ENCODE measurements at regions of chr3 and their contacts with region 1.

Region 1: DNA sequence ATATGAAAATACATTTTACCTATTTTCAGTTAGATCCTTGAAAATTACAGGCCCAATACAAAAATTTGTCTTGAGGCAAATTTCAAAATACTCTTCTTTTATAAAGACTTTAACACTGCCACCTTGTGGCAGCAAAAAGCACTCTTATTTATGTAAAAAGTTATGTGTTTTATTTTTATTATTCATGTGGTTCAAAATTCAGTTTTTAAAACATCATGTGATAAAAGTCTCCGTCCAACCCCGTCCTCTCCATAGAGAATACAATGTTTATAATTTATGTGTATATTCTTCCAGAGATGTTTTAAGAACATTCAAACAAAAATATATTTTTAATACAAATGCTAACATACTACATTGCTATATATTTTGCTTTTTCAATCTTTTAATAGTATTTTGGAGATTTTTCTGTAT is 36.9 kb upstream of the TRIM59 start:
- DNase-seq: peak; percentile 68
- H3K4me3 ChIP-seq: no peak overlapping the region
- H3K27ac ChIP-seq: no peak overlapping the region
- H3K4me1 ChIP-seq: no peaks in the 10 kb centered on the region
- CTCF ChIP-seq: peak; percentile 93

Region 2: DNA sequence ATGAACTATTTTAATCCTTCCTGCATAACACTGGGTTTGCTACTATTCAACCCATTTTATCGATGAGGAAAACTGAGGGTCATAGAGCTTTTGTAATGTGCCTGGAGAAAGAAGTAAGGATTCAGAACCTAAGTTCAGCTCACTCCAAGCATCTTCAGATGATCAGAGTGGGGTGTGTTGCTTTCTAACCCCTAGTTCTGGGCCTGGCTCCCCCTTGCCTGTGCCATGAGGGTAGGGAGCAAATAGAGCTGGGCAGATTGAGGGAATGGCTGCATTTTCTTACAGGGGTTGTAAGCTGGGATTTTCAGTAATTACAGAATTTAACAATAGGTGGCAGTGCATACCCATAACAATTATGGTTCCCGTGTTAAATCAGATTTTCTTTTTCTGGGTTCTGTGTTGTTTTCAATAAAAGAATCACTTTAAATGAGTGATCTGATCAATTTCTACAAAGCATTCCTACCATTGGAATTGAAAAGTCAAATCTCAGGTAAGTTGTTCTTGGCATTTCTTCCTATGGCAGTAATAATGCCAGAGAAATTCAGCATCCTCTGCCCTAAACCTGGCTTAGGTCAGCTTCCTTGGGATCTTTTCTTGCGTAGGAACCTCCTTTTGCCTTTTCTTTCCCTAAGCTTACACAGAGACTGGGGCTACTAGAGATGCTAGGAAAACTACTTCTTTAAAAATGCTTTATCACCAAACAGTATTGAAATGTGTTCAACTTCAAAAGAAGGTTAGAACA is 601.6 kb before region 1 on chr3:
- CTCF ChIA-PET with region 1: no interaction called
- POLR2A ChIA-PET with region 1: no interaction called
- intact Hi-C with region 1: loop called (anchors 2 kb)
- DNase-seq: peak; percentile 32
- H3K4me3 ChIP-seq: no peak overlapping the region
- H3K27ac ChIP-seq: no peak overlapping the region
- H3K4me1 ChIP-seq: no peaks in the 10 kb centered on the region
- CTCF ChIP-seq: peak; percentile 80

Region 3: DNA sequence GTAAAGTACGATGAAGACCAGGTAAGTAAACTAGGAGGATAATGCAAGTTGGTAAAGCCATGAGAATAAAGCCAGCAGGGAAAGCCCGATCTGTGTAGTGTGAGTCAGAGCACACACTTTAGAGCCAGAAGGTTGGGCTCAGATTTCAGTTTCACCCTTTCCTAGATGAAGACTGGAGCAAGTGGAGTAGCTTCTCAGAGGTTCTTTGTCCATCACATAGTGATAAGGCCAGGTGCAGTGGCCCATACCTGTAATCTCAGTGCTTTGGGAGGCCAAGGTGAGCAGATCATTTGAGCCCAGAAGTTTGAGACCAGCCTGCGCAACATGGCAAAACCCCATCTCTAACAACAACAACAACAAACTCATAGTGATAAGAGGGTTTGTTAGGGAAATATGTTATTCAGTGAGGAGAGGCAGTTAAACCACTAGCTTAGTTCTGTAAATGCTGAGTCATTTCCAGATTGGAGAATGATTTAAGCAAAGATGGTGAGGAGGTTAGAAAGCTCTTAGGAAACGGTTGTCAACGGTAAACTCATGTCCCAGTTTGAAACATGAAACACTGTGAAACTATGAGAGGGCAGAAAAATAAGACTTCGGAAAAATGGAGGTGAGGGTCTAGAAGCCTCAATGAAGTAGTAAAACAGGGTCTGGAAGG is 458.8 kb before region 1 on chr3:
- CTCF ChIA-PET with region 1: no interaction called
- POLR2A ChIA-PET with region 1: no interaction called
- intact Hi-C with region 1: loop called (anchors 1 kb)
- DNase-seq: no peak
- H3K4me3 ChIP-seq: no peak overlapping the region
- H3K27ac ChIP-seq: no peak overlapping the region
- H3K4me1 ChIP-seq: no peaks in the 10 kb centered on the region
- CTCF ChIP-seq: no peak

Region 4: DNA sequence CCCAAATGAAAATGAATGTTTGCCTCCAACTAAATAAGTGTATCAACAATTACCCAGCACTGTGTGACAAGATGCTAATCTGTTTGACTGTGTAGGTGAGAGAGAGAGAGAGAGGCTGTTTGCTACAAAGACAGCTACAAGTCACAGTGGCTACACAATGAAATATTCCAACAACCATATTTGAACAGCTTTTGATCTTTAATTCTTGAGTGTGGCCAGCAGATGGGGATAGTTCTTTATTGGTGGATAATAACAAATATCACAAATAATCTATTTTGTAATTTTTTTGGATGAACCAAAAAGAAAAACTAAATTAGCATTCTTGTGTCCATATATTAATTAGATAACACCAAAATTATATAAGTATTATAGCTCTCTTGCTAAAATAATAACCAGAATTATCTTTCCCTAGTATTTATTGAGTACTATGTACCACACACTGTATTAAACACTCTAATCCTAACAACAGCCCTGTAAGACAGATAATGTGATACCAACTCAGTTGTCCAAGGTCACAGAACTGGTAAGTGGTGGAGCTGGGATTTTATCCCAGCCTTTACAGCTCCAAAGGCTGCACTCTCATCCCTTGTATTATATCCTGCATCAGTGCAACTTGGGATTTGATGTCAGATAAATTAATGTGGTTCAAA is 323.1 kb before region 1 on chr3:
- CTCF ChIA-PET with region 1: no interaction called
- POLR2A ChIA-PET with region 1: no interaction called
- intact Hi-C with region 1: loop called (anchors 1 kb)
- DNase-seq: peak; percentile 12
- H3K4me3 ChIP-seq: no peak overlapping the region
- H3K27ac ChIP-seq: no peak overlapping the region
- H3K4me1 ChIP-seq: no peaks in the 10 kb centered on the region
- CTCF ChIP-seq: peak; percentile 74

Region 5: DNA sequence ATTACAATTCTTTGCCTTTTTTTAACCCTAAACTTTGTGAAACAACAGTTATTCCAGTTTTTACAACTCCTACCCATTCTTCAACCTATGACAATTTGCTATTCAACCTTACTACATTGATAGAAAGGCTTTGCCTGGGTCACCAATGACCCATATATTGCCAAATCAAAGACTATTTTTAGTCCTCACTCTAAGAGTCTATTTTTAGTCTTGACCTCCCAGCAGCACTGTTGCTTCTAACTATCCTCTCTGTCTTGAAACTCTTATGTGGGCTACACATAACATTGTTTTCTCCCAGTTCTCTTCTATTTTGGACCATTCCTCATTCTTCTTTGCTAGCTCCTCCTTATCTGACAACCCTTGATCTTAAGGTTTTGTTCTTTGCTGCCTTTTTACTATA is 189.9 kb before region 1 on chr3:
- CTCF ChIA-PET with region 1: no interaction called
- POLR2A ChIA-PET with region 1: no interaction called
- intact Hi-C with region 1: no loop called
- DNase-seq: no peak
- H3K4me3 ChIP-seq: no peak overlapping the region
- H3K27ac ChIP-seq: no peak overlapping the region
- H3K4me1 ChIP-seq: no peaks in the 10 kb centered on the region
- CTCF ChIP-seq: no peak

Region 6: DNA sequence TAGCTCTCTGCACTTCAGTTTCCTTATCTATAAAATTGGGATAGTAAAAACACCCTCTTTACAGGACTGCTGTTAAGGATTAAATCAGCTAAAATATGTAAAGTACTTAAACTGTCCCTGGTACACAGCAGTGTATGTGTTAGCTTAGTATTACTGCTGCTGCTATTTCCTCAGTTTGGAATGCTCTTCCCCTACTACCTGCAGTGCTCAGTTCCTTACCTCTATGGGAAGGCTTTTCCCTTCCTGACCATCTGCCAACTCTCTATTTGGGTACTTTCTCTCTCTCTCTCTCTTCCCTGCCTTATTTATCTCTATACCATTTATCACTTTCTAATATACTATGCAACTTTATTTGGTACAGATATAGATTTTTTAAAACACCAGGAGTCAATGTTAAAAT is 52.4 kb after region 1 on chr3:
- CTCF ChIA-PET with region 1: no interaction called
- POLR2A ChIA-PET with region 1: no interaction called
- intact Hi-C with region 1: no loop called
- DNase-seq: no peak
- H3K4me3 ChIP-seq: no peak overlapping the region
- H3K27ac ChIP-seq: no peak overlapping the region
- H3K4me1 ChIP-seq: no peaks in the 10 kb centered on the region
- CTCF ChIP-seq: no peak

Region 7: DNA sequence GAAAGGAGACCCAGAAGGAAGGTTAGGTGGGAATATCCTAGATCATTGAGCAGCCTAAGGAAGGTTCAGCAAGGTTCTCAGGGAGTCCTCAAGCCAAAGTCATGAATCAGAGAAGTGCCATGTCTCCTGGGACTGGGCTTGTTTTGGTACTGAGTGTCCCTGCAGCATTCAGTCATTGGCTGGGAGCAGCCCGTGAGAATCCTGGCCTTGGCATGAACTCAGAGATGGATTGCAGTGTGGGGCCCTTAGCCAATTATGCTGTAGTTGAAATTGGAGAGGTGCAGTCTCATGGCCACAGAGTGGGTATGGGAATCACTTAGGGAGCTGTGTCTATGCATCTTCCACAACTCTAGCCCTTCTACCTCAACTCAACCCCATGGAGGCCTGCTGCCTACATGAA is 252.6 kb after region 1 on chr3:
- CTCF ChIA-PET with region 1: no interaction called
- POLR2A ChIA-PET with region 1: no interaction called
- intact Hi-C with region 1: no loop called
- DNase-seq: no peak
- H3K4me3 ChIP-seq: no peak overlapping the region
- H3K27ac ChIP-seq: no peak overlapping the region
- H3K4me1 ChIP-seq: no peaks in the 10 kb centered on the region
- CTCF ChIP-seq: no peak

Measured in OCI-LY7 (cell line).